CD4-positive, alpha-beta memory T cell (primary cell): ENCODE measurements at regions of chr11 and their contacts with region 1.

Region 1: GRCh38 chr11:3014057-3014938 is 22.2 kb upstream of the NAP1L4 start:
- DNase-seq: peak; percentile 88 to 93 (median 90)
- H3K4me3 ChIP-seq: peak overlapping the region in 1 of 2 donors; percentile 11
- H3K4me3 Mint-ChIP-seq: peak overlapping the region; percentile 43 to 84 (median 74)
- H3K27ac ChIP-seq: peak overlapping the region; percentile 39
- H3K27ac Mint-ChIP-seq: peak overlapping the region; percentile 85 to 95 (median 90)
- H3K4me1 ChIP-seq: peaks cover 51% of the 10 kb centered on the region
- H3K4me1 Mint-ChIP-seq: peaks cover 21 to 74% (median 37%) of the 10 kb centered on the region in 4 donors
- H3K27me3 ChIP-seq: no peaks in the 10 kb centered on the region
- H3K27me3 Mint-ChIP-seq: no peaks in the 10 kb centered on the region

Region 2: DNA sequence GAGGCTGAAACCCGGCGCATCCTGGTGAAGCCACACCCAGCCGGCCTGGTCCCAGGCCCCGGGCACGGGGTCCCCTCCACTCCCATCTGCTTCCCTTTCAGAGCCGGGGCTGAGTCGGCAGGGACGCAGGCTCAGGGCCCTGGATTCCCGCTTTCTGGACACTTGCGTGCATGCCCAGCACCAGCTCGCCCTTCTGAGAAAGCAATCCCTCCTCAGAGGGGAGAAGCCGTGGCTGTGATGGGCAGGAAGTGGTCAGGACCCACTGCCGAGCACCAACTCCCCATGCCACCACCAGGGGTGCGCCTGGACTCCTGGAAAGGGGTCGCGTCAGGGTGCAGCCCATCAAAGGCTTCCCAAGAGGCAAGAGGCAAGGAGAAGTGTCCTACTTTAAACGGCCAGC is 143.8 kb before region 1 on chr11:
- CTCF ChIA-PET with region 1: no interaction called
- POLR2A ChIA-PET with region 1: no interaction called
- intact Hi-C with region 1: no loop called
- DNase-seq: no peak
- H3K4me3 ChIP-seq: no peak overlapping the region
- H3K4me3 Mint-ChIP-seq: no peak overlapping the region
- H3K27ac ChIP-seq: no peak overlapping the region
- H3K27ac Mint-ChIP-seq: no peak overlapping the region
- H3K4me1 ChIP-seq: no peaks in the 10 kb centered on the region
- H3K4me1 Mint-ChIP-seq: peaks cover 0 to 6% (median 4%) of the 10 kb centered on the region in 4 donors
- H3K27me3 ChIP-seq: peaks cover 4% of the 10 kb centered on the region
- H3K27me3 Mint-ChIP-seq: peaks cover 18 to 22% of the 10 kb centered on the region in 2 donors

Region 3: GRCh38 chr11:2975594-2975993 is 38.7 kb before region 1 on chr11:
- CTCF ChIA-PET with region 1: interaction called, 49 read pairs
- POLR2A ChIA-PET with region 1: interaction called, 18 read pairs
- intact Hi-C with region 1: no loop called
- DNase-seq: peak; percentile 47 to 63 (median 49)
- H3K4me3 ChIP-seq: no peak overlapping the region
- H3K4me3 Mint-ChIP-seq: no peak overlapping the region
- H3K27ac ChIP-seq: no peak overlapping the region
- H3K27ac Mint-ChIP-seq: peak overlapping the region in 3 of 7 donors; percentile 30 to 69 (median 51)
- H3K4me1 ChIP-seq: peaks cover 12% of the 10 kb centered on the region
- H3K4me1 Mint-ChIP-seq: peaks cover 21 to 44% (median 36%) of the 10 kb centered on the region in 4 donors
- H3K27me3 ChIP-seq: no peaks in the 10 kb centered on the region
- H3K27me3 Mint-ChIP-seq: no peaks in the 10 kb centered on the region

Region 4: DNA sequence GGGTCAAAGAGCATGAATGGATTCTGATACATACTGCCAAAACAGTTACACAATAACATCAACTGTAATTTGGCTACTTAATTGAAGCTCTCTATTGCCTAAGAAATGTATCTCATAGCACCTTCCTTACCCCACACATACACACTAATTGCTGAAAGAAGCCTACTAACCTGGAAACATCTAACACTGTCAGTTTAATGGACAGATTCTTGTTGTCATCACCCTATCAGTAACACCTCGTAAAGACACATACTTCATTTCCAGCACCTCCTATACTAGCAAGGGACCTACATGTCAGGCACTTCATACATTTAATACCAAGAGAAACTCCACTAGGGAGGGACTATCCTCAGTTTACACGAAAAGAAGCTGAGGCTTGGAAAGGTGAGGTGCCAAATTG is 32.1 kb before region 1 on chr11:
- CTCF ChIA-PET with region 1: interaction called, 12 read pairs
- POLR2A ChIA-PET with region 1: interaction called, 178 read pairs
- intact Hi-C with region 1: no loop called
- DNase-seq: no peak
- H3K4me3 ChIP-seq: no peak overlapping the region
- H3K4me3 Mint-ChIP-seq: peak overlapping the region in 6 of 8 donors; percentile 7 to 76 (median 50)
- H3K27ac ChIP-seq: peak overlapping the region; percentile 13
- H3K27ac Mint-ChIP-seq: peak overlapping the region; percentile 32 to 86 (median 67)
- H3K4me1 ChIP-seq: peaks cover 75% of the 10 kb centered on the region
- H3K4me1 Mint-ChIP-seq: peaks cover 41 to 77% (median 53%) of the 10 kb centered on the region in 4 donors
- H3K27me3 ChIP-seq: no peaks in the 10 kb centered on the region
- H3K27me3 Mint-ChIP-seq: no peaks in the 10 kb centered on the region

Region 5: DNA sequence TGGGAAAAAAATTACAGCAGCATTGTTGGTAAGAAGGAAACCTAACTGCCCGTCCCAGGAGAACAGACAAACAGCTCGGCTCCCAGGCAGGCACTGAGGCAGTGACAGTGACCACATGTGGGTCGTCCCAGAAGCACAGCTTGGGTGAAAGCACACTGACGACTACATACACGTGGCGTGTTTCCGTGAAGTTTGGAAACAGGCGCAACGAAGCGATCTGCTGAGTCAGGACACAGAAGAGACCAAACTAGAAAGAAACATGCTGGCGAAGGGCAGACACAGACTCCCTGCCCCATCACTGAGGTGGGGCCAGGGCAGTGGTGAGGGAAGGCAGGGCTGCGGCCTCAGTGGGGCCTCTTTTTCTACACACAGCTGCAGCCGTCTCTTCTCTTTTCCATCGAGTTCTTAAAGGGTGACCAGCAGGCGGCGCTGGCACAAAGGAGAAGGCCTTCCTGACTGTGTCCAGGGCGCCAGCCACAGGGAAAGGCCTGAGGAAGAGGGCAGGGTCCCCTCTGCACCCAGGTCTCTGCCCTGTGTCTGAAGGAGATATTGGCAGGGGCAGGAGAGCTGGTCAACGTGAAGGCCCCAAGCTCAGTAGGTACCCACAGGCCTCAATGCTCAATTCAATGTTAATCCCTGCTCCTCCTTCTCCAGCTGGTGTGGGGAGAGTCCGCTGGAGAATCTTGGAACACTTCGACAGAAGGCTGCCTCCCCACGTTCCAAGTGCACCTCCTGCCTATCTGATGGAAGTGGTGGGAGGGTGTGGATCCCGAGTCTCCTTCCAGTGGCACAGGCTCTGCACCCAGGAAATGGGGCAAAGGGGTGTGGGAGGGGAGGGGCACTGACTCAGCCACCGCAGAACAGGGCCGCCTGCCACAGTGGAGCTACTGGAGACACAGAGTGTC is 23.0 kb after region 1 on chr11:
- CTCF ChIA-PET with region 1: interaction called, 14 read pairs
- POLR2A ChIA-PET with region 1: interaction called, 7 read pairs
- intact Hi-C with region 1: no loop called
- DNase-seq: peak; percentile 28 to 62 (median 38)
- H3K4me3 ChIP-seq: no peak overlapping the region
- H3K4me3 Mint-ChIP-seq: peak overlapping the region in 1 of 8 donors; percentile 5
- H3K27ac ChIP-seq: no peak overlapping the region
- H3K27ac Mint-ChIP-seq: peak overlapping the region in 6 of 7 donors; percentile 4 to 62 (median 36)
- H3K4me1 ChIP-seq: peaks cover 14% of the 10 kb centered on the region
- H3K4me1 Mint-ChIP-seq: peaks cover 8 to 32% (median 24%) of the 10 kb centered on the region in 4 donors
- H3K27me3 ChIP-seq: no peaks in the 10 kb centered on the region
- H3K27me3 Mint-ChIP-seq: no peaks in the 10 kb centered on the region

Region 6: GRCh38 chr11:3057069-3057963 is 43.0 kb after region 1 on chr11 and contains the start of gene CARS1:
- CTCF ChIA-PET with region 1: no interaction called
- POLR2A ChIA-PET with region 1: interaction called, 17 read pairs
- intact Hi-C with region 1: no loop called
- DNase-seq: peak; percentile 89 to 93 (median 90)
- H3K4me3 ChIP-seq: peak within 1 kb of the TSS; percentile 58 to 85
- H3K4me3 Mint-ChIP-seq: peak within 1 kb of the TSS; percentile 86 to 93 (median 88)
- H3K27ac ChIP-seq: peak within 1 kb of the TSS; percentile 96
- H3K27ac Mint-ChIP-seq: peak within 1 kb of the TSS; percentile 81 to 93 (median 90)
- H3K4me1 ChIP-seq: peaks cover 32% of the 10 kb centered on the region
- H3K4me1 Mint-ChIP-seq: peaks cover 20 to 45% (median 35%) of the 10 kb centered on the region in 4 donors
- H3K27me3 ChIP-seq: no peaks in the 10 kb centered on the region
- H3K27me3 Mint-ChIP-seq: peaks cover 0 to 3% of the 10 kb centered on the region in 2 donors
- total RNA-seq, gene CARS1: 71.0 to 80.3 TPM

Region 7: GRCh38 chr11:3073029-3073435 is 58.7 kb after region 1 on chr11:
- CTCF ChIA-PET with region 1: no interaction called
- POLR2A ChIA-PET with region 1: no interaction called
- intact Hi-C with region 1: no loop called
- DNase-seq: no peak
- H3K4me3 ChIP-seq: no peak overlapping the region
- H3K4me3 Mint-ChIP-seq: no peak overlapping the region
- H3K27ac ChIP-seq: no peak overlapping the region
- H3K27ac Mint-ChIP-seq: no peak overlapping the region
- H3K4me1 ChIP-seq: no peaks in the 10 kb centered on the region
- H3K4me1 Mint-ChIP-seq: no peaks in the 10 kb centered on the region
- H3K27me3 ChIP-seq: no peaks in the 10 kb centered on the region
- H3K27me3 Mint-ChIP-seq: peaks cover 3 to 4% of the 10 kb centered on the region in 2 donors